Activated T-helper 2 cell treated with anti-CD3 and anti-CD28 coated beads, Interferon-gamma antibody, Interleukin-2, Interleukin-4, amounts not matched to agents 10 μg/mL and 5 μg/mL and 100 μg/mL, durations not matched to agents 14 hours and 24 hours and 36 hours (primary cell): ENCODE measurements at regions of chr12 and their contacts with region 1.

Region 1: GRCh38 chr12:26097046-26097878 is 27.6 kb downstream of the BHLHE41 start:
- DNase-seq: peak; percentile 21
- H3K4me3 Mint-ChIP-seq: no peak overlapping the region
- H3K27ac Mint-ChIP-seq: no peak overlapping the region
- H3K4me1 Mint-ChIP-seq: peaks cover 2% of the 10 kb centered on the region
- H3K27me3 Mint-ChIP-seq: peaks cover 37% of the 10 kb centered on the region

Region 2: DNA sequence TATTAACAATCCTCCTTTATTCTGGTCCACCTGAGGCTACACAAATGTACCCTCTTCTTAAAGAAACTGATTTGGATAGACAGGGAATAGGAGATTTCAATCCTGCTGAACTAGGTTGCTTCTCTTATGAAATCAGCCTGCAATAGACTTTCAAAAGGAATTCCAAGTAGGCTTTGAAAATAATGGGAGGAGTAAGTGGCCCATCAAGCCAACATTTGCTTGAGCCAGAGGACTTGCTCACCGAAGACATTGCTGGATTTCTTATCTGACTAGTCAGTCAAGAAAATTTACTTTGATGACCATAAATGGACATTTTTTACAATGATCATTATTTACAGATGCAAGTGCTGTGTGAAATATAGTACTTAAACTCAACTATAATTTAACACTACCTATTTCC is 221.6 kb before region 1 on chr12:
- intact Hi-C with region 1: no loop called
- DNase-seq: no peak
- H3K4me3 Mint-ChIP-seq: no peak overlapping the region
- H3K27ac Mint-ChIP-seq: no peak overlapping the region
- H3K4me1 Mint-ChIP-seq: no peaks in the 10 kb centered on the region
- H3K27me3 Mint-ChIP-seq: no peaks in the 10 kb centered on the region

Region 3: GRCh38 chr12:26614020-26614616 is 516.9 kb after region 1 on chr12:
- intact Hi-C with region 1: loop called (anchors 5 kb)
- DNase-seq: no peak
- H3K4me3 Mint-ChIP-seq: no peak overlapping the region
- H3K27ac Mint-ChIP-seq: no peak overlapping the region
- H3K4me1 Mint-ChIP-seq: no peaks in the 10 kb centered on the region
- H3K27me3 Mint-ChIP-seq: no peaks in the 10 kb centered on the region

Region 4: GRCh38 chr12:26651566-26652188 is 554.4 kb after region 1 on chr12:
- intact Hi-C with region 1: loop called (anchors 5 kb)
- DNase-seq: peak; percentile 18
- H3K4me3 Mint-ChIP-seq: no peak overlapping the region
- H3K27ac Mint-ChIP-seq: no peak overlapping the region
- H3K4me1 Mint-ChIP-seq: peaks cover 5% of the 10 kb centered on the region
- H3K27me3 Mint-ChIP-seq: no peaks in the 10 kb centered on the region

Region 5: GRCh38 chr12:26701604-26702215 is 604.4 kb after region 1 on chr12:
- intact Hi-C with region 1: loop called (anchors 5 kb)
- DNase-seq: no peak
- H3K4me3 Mint-ChIP-seq: no peak overlapping the region
- H3K27ac Mint-ChIP-seq: no peak overlapping the region
- H3K4me1 Mint-ChIP-seq: peaks cover 15% of the 10 kb centered on the region
- H3K27me3 Mint-ChIP-seq: no peaks in the 10 kb centered on the region

Region 6: DNA sequence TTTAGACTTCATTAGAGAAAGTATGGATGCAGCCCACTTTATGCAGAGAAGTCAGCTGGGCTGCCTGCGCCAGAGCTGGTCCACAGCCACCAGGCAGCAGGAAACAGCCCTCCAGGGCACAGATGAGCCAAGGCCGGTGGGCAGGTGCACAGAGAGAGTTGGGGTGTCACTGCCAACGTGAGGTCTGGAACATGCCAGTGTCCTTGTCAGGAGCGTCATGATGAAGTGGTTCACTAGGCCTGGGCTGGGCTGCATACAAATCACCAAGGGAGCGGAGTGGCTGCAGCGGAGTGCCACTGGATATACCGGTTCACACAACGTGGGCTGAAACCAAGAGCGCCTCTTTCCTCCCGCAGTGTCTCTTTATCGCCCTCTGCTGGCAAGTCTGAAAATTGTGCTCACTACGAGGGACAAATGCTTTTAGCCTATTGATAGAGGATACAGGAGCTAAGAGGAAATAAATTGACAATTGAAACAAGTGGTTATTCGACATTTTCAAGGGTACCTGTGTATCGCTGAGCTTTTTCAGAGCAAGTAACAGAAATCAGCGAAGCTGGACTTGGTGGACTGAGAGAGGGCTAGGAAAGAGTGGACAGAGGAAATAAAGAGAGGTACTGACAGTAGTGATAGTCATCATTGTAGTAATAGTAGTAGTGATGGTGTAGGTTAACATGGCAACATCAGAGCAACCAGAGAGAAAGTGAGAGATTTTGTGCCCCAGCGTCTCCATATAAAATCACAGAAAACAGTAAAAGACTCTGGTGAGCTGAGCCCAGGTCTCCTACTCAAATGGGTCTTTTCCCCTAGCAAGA is 787.7 kb after region 1 on chr12:
- intact Hi-C with region 1: loop called (anchors 5 kb)
- DNase-seq: peak; percentile 78
- H3K4me3 Mint-ChIP-seq: no peak overlapping the region
- H3K27ac Mint-ChIP-seq: no peak overlapping the region
- H3K4me1 Mint-ChIP-seq: peaks cover 16% of the 10 kb centered on the region
- H3K27me3 Mint-ChIP-seq: peaks cover 11% of the 10 kb centered on the region